Motor neuron (in vitro differentiated cells): ENCODE measurements at regions of chr11 and their contacts with region 1.

Region 1: GRCh38 chr11:96012086-96012824 is 88.3 kb upstream of the MTMR2 start:
- ATAC-seq: peak; percentile 94 to 99 (median 96)
- H3K4me3 ChIP-seq: peak overlapping the region in 1 of 5 donors; percentile 14
- H3K27ac ChIP-seq: no peak overlapping the region
- H3K4me1 ChIP-seq: peaks cover 12 to 18% of the 10 kb centered on the region in 2 donors

Region 2: GRCh38 chr11:95891423-95892177 is 120.7 kb before region 1 on chr11:
- in situ Hi-C with region 1: loop called in 1 of 9 experiments (anchors 25 kb)
- ATAC-seq: peak; percentile 26 to 100 (median 64)
- H3K4me3 ChIP-seq: no peak overlapping the region
- H3K27ac ChIP-seq: no peak overlapping the region
- H3K4me1 ChIP-seq: peaks cover 0 to 6% of the 10 kb centered on the region in 2 donors